Activated B cell treated with CpG ODN at 0.5 μM for 24 hours (primary cell): ENCODE measurements at regions of chr5 and their contacts with region 1.

Region 1: DNA sequence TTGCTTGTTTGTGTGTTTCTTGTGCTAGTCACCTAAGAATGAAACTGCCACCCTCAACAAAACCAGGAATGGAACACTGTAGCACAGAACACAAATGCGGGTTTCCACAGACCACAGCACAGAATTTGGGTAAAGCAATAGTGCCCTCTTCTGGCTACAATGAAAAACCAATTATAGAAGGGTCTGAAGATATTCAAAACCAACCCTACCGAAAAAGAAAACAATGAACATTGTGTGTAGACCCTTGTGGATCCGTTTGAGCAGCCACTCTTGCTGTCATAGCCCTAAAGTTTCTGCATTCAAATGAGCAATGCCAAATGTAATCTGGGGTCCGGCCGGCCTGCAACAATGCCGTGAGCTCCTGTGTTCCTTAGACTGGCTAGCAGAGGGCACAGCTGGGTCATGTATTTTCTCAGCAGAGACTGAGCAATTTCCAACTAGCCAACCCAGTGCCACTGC is 8.3 kb upstream of the ENC1 start:
- DNase-seq: no peak
- ATAC-seq: peak; percentile 78
- H3K4me3 Mint-ChIP-seq: no peak overlapping the region
- H3K27ac Mint-ChIP-seq: no peak overlapping the region
- H3K4me1 Mint-ChIP-seq: no peaks in the 10 kb centered on the region
- H3K27me3 Mint-ChIP-seq: peaks cover 7% of the 10 kb centered on the region
- CTCF ChIP-seq: peak; percentile 53

Region 2: GRCh38 chr5:73792687-73793320 is 856.1 kb before region 1 on chr5:
- CTCF ChIA-PET with region 1: no interaction called
- POLR2A ChIA-PET with region 1: no interaction called
- intact Hi-C with region 1: loop called (anchors 2 kb)
- DNase-seq: peak; percentile 24
- ATAC-seq: peak; percentile 64
- H3K4me3 Mint-ChIP-seq: no peak overlapping the region
- H3K27ac Mint-ChIP-seq: no peak overlapping the region
- H3K4me1 Mint-ChIP-seq: no peaks in the 10 kb centered on the region
- H3K27me3 Mint-ChIP-seq: peaks cover 18% of the 10 kb centered on the region
- CTCF ChIP-seq: peak; percentile 88

Region 3: DNA sequence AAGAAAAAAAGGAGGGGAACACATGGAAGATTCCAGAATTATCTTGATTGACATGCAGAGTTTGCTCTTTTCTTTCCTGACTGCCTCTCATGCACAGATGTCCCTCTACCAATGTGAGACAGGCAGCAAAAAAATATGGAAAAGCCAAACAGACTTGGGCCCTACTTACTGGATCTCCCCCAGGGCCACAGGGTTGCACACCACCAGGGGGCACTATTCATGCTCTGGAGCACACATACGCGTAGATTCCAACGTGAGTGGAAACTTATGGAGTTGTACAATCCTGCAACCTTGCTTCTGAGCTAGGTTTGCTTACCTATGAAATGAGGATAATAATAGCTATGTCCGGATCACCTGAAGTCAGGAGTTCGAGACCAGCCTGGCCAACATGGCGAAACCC is 703.4 kb before region 1 on chr5:
- CTCF ChIA-PET with region 1: no interaction called
- POLR2A ChIA-PET with region 1: no interaction called
- intact Hi-C with region 1: loop called (anchors 2 kb)
- DNase-seq: no peak
- ATAC-seq: no peak
- H3K4me3 Mint-ChIP-seq: no peak overlapping the region
- H3K27ac Mint-ChIP-seq: no peak overlapping the region
- H3K4me1 Mint-ChIP-seq: no peaks in the 10 kb centered on the region
- H3K27me3 Mint-ChIP-seq: peaks cover 19% of the 10 kb centered on the region
- CTCF ChIP-seq: no peak

Region 4: DNA sequence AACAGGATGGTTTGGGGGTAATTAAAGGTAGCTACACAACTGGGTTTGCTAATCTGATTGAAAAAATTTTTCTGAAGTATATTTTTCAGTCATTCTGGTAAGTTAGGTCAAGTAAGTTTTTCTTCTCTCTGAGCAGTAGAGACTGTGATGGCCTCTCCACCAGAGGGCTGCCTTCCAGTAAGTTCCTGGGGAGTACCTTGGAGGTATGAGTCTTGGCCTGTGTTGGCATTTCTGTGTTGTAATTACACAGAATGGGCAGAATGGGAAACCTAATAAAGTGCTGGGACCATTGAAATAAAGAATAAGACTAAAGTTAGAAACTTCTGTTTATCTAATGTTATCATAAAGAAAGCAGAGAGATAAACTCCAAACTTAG is 592.1 kb before region 1 on chr5:
- CTCF ChIA-PET with region 1: no interaction called
- POLR2A ChIA-PET with region 1: no interaction called
- intact Hi-C with region 1: loop called (anchors 1 kb)
- DNase-seq: no peak
- ATAC-seq: no peak
- H3K4me3 Mint-ChIP-seq: no peak overlapping the region
- H3K27ac Mint-ChIP-seq: no peak overlapping the region
- H3K4me1 Mint-ChIP-seq: no peaks in the 10 kb centered on the region
- H3K27me3 Mint-ChIP-seq: no peaks in the 10 kb centered on the region
- CTCF ChIP-seq: no peak

Region 5: DNA sequence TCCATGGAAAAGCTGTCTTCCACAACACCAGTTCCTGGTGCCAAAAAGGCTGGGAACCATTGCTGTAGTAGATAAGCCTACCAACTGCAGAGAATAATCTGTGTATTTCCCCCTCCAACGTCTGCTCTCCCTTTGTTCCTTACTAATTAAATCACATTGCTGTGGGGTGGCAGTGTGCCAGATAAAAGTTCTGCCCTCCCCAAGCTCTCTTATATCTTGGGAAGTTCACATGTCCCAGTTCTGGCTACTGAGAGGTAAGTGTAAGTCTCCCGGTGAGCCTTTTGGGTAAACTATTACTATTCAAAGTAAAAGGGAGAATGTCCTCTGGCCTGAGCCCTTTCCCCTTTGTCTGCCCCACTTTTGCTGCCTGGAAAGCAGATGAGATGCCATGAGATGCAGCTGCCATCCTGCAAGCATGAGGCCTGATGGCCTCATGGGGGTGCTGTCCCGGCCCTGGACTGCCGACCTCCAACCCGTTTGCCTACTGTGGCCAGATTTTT is 23.1 kb before region 1 on chr5:
- CTCF ChIA-PET with region 1: no interaction called
- POLR2A ChIA-PET with region 1: no interaction called
- intact Hi-C with region 1: no loop called
- DNase-seq: no peak
- ATAC-seq: no peak
- H3K4me3 Mint-ChIP-seq: no peak overlapping the region
- H3K27ac Mint-ChIP-seq: no peak overlapping the region
- H3K4me1 Mint-ChIP-seq: peaks cover 8% of the 10 kb centered on the region
- H3K27me3 Mint-ChIP-seq: peaks cover 12% of the 10 kb centered on the region
- CTCF ChIP-seq: no peak